ENCODE measurements at regions of chr7 and their contacts with region 1.

Region 1: GRCh38 chr7:28106321-28106829 is 74.2 kb downstream of the JAZF1 start:
- DNase-seq: peak; percentile 93
- ATAC-seq: peak; percentile 92
- H3K4me3 ChIP-seq: no peak overlapping the region
- H3K27ac ChIP-seq: peak overlapping the region; percentile 83; the same call in 1 of the 2 replicates
- H3K4me1 ChIP-seq: peaks cover 38% of the 10 kb centered on the region
- H3K27me3 ChIP-seq: no peaks in the 10 kb centered on the region
- CTCF ChIP-seq: no peak
- POLR2A ChIP-seq: no peak
- RAD21 ChIP-seq: no peak

Region 2: DNA sequence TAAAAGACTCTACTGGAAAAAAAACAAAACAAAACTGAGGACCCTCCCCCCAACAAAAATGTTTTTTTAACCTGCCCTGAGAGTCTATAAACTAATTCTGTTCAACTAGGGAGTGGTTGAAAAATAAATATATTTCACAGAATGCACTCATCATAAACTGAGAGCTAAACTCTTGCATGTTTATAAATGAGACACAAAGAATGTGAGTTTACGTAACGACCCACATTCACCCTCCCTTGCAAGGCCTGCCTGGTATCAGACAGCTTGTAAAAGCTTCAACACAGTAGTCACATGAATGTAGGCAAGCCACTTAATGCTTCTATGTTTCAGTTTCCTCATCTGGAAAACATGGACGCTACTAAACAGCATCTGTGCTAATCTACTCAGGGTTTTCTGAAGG is 23.9 kb after region 1 on chr7:
- CTCF ChIA-PET with region 1: interaction called, 4 read pairs
- POLR2A ChIA-PET with region 1: interaction called, 3 read pairs
- dilution Hi-C with region 1: no loop called
- in situ Hi-C with region 1: no loop called
- intact Hi-C with region 1: loop called (anchors 1 kb)
- DNase-seq: peak; percentile 95
- ATAC-seq: peak; percentile 87
- H3K4me3 ChIP-seq: no peak overlapping the region
- H3K27ac ChIP-seq: peak overlapping the region; percentile 51; the same call in 1 of the 2 replicates
- H3K4me1 ChIP-seq: peaks cover 18% of the 10 kb centered on the region
- H3K27me3 ChIP-seq: no peaks in the 10 kb centered on the region
- CTCF ChIP-seq: no peak
- POLR2A ChIP-seq: no peak
- RAD21 ChIP-seq: no peak

Region 3: GRCh38 chr7:28165961-28166955 is 59.9 kb after region 1 on chr7:
- CTCF ChIA-PET with region 1: no interaction called
- POLR2A ChIA-PET with region 1: no interaction called
- dilution Hi-C with region 1: no loop called
- in situ Hi-C with region 1: no loop called
- intact Hi-C with region 1: loop called (anchors 2 kb)
- DNase-seq: peak; percentile 92
- ATAC-seq: peak; percentile 74
- H3K4me3 ChIP-seq: no peak overlapping the region
- H3K27ac ChIP-seq: peak overlapping the region; percentile 88
- H3K4me1 ChIP-seq: peaks cover 31% of the 10 kb centered on the region
- H3K27me3 ChIP-seq: no peaks in the 10 kb centered on the region
- CTCF ChIP-seq: no peak
- POLR2A ChIP-seq: no peak
- RAD21 ChIP-seq: no peak

Region 4: DNA sequence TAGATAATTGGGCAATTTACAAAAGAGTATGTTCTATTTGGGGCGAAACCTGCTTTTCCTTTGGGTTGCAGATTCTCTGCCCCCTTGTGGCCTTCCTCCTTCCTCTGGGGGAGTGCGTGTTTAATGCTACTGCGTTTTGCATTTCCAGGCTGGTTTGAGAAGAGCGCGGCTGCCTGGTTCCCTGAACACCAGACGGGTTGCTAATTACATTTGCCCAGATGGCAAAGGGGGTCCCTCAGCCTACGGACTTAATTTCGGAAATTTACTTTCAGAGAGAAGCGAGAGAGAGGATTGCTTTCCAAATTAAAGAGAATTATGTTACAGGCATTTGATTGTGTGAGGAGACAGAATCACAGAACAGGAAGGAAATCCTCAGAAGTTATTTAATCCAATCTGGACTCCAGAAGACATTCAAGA is 166.1 kb after region 1 on chr7:
- CTCF ChIA-PET with region 1: no interaction called
- POLR2A ChIA-PET with region 1: no interaction called
- dilution Hi-C with region 1: no loop called
- in situ Hi-C with region 1: no loop called
- intact Hi-C with region 1: loop called (anchors 5 kb)
- DNase-seq: peak; percentile 68
- ATAC-seq: peak; percentile 96
- H3K4me3 ChIP-seq: no peak overlapping the region; the same call in 1 of the 2 replicates
- H3K27ac ChIP-seq: no peak overlapping the region
- H3K4me1 ChIP-seq: no peaks in the 10 kb centered on the region
- H3K27me3 ChIP-seq: no peaks in the 10 kb centered on the region; the same call in 1 of the 2 replicates
- CTCF ChIP-seq: peak; percentile 65
- POLR2A ChIP-seq: no peak
- RAD21 ChIP-seq: peak; percentile 63

Measured in IMR-90 (cell line).